Endothelial cell of umbilical vein (primary cell): ENCODE measurements at regions of chr16 and their contacts with region 1.

Region 1: GRCh38 chr16:89330177-89330856 is 112.8 kb downstream of the ZNF778 start:
- DNase-seq: peak; percentile 78
- H3K4me3 ChIP-seq: peak overlapping the region in 1 of 3 experiments; percentile 6
- H3K27ac ChIP-seq: peak overlapping the region; percentile 56
- H3K4me1 ChIP-seq: peaks cover 68% of the 10 kb centered on the region
- H3K27me3 ChIP-seq: no peaks in the 10 kb centered on the region
- CTCF ChIP-seq: no peak
- POLR2A ChIP-seq: peak; percentile 18

Region 2: DNA sequence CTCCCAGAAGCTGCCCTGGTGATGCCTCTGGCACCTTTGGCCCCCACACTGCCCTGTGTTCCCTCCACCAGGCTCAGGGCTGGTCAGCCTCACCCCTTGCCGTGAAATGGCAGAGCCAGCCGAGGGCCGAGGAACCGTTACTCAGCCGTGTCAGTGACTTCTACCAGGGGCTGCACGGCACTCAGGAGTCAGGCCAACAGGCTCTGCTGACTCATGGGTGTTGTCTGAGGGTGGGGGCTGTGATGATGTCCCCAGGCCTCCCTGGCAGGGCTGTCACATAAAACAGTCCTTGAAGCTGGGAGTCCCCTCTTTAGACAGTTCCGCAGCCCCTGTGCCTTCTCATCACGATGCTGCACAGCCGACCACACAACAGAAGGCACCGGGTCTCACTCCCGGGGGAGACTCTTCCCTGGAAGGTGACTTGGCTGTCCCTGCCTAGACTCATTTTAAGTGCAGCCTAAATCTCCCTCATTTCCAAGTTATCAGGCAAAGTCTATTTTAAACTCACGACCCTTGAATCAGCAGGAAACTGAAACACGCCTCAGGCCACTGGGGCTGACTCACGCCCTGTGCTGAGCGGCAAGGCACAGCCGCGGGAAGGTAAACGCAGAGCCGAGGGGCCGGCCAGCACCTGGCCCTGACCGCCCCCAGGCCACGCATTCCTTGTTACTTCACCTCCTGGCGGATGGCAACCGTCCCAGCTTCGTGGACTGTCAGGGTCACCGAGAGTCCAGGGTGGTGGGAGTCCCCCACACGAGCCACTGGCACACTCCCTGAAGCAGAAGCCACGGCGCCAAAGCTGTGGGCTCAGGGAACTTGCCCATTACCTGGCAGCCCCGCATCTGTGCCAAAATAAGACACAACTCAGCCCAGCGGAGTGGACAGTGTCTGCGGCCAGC is 10.2 kb before region 1 on chr16:
- CTCF ChIA-PET with region 1: interaction called, 8 read pairs
- POLR2A ChIA-PET with region 1: no interaction called
- dilution Hi-C with region 1: no loop called
- intact Hi-C with region 1: loop called (anchors 1 kb)
- DNase-seq: peak; percentile 84
- H3K4me3 ChIP-seq: no peak overlapping the region
- H3K27ac ChIP-seq: peak overlapping the region; percentile 77
- H3K4me1 ChIP-seq: peaks cover 85% of the 10 kb centered on the region
- H3K27me3 ChIP-seq: no peaks in the 10 kb centered on the region
- CTCF ChIP-seq: no peak
- POLR2A ChIP-seq: no peak

Region 3: DNA sequence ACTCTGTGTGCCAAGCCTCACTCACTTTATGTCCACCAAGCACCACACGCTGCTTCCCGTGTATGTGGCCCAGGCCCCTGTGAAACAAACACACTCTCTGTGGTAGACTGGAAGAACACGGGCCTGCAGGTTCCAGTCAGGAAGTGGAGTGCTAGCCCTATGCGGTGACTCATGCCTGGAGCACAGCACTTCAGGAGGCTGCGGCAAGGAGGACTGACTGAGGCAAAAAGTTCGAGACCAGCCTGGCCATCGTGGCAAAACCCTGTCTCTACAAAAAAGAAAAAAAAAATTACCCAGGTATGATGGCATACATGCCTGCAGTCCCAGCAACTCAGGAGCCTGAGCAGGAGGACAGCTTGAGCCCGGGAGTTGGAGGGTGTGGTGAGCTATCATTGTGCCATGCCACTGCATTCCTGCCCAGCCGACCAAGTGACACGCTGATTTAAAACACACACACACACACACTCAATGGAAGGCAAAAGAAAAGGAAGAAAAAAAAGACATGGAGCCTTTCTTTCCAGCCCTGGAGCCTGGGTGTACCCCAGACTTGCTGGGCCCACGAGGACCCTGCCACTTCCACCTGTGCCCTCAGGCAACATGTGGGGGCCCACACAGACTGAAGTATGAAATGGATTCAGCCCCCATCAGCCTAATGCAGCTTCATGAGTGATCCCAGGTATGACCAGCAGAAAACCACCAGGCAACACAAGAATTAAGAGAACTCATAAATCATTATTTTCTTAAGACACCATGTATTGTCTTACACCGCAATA is 33.5 kb after region 1 on chr16:
- CTCF ChIA-PET with region 1: interaction called, 6 read pairs
- POLR2A ChIA-PET with region 1: no interaction called
- dilution Hi-C with region 1: no loop called
- intact Hi-C with region 1: loop called (anchors 1 kb)
- DNase-seq: peak; percentile 87
- H3K4me3 ChIP-seq: no peak overlapping the region
- H3K27ac ChIP-seq: peak overlapping the region; percentile 16
- H3K4me1 ChIP-seq: peaks cover 61% of the 10 kb centered on the region
- H3K27me3 ChIP-seq: no peaks in the 10 kb centered on the region
- CTCF ChIP-seq: no peak
- POLR2A ChIP-seq: no peak

Region 4: DNA sequence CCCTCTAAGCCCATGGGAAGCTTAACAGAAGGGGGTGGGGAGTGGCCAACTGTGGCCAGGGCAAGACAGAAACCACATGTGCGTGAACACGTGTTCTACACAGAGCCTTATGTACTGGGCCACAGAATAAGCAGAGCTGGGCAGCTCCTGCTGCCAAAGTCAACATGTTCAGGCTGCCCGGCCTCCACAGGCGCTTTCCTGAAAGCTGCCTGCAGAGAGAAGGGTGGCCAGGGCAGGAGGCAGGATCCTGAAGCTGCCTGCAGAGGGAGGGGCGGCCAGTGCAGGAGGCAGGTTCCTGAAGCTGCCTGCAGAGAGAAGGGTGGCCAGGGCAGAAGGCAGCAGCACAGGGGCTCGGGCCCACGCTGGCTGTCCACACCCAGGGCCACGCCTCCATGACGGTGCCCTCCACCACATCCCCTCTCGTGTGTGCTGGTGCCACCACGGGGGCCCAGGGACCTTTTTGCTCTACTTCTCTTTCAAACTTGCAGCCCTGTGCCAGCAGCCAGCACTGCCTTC is 80.5 kb after region 1 on chr16:
- CTCF ChIA-PET with region 1: interaction called, 3 read pairs
- POLR2A ChIA-PET with region 1: no interaction called
- dilution Hi-C with region 1: no loop called
- intact Hi-C with region 1: loop called (anchors 5 kb)
- DNase-seq: peak; percentile 97
- H3K4me3 ChIP-seq: no peak overlapping the region
- H3K27ac ChIP-seq: peak overlapping the region; percentile 39
- H3K4me1 ChIP-seq: peaks cover 52% of the 10 kb centered on the region
- H3K27me3 ChIP-seq: no peaks in the 10 kb centered on the region
- CTCF ChIP-seq: peak in 1 of 2 donors; percentile 52
- POLR2A ChIP-seq: peak; percentile 22

Region 5: DNA sequence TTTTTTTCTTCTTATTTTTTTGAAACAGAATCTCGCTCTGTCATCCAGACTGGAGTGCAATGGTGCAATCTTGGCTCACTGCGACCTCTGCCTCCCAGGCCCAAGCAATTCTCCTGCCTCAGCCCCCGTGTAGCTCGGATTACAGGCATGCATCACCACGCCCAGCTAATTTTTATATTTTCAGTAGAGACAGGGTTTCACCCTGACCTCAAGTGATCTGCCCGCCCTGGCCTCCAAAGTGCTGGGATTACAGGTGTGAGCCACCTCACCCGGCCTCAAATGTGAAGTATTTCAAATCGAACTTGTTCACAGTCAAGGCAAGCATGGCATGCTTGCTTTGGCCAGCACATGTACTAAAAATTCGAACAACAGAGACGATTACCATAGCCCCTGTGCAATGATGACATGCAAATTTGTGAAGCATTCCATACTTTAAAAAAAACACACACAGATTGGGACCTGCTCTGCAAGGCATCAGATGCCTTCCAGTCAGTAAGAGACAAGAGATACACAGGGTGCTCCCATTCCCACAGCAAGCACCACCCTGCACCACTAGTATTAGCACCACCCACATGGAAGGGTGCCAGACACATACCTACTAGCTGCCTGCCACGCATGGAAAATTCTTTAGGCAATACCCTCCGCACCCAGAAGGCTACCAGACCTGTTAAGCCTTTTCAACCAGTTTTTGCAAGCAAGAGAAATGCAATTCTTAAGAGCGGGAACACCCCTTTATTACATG is 112.8 kb after region 1 on chr16:
- CTCF ChIA-PET with region 1: no interaction called
- POLR2A ChIA-PET with region 1: no interaction called
- dilution Hi-C with region 1: no loop called
- intact Hi-C with region 1: no loop called
- DNase-seq: peak; percentile 20
- H3K4me3 ChIP-seq: no peak overlapping the region
- H3K27ac ChIP-seq: no peak overlapping the region
- H3K4me1 ChIP-seq: peaks cover 17% of the 10 kb centered on the region
- H3K27me3 ChIP-seq: no peaks in the 10 kb centered on the region
- CTCF ChIP-seq: no peak
- POLR2A ChIP-seq: no peak

Region 6: GRCh38 chr16:89490387-89491237 is 160.3 kb after region 1 on chr16 and contains the start of gene ANKRD11:
- CTCF ChIA-PET with region 1: interaction called, 9 read pairs
- POLR2A ChIA-PET with region 1: no interaction called
- dilution Hi-C with region 1: no loop called
- intact Hi-C with region 1: loop called (anchors 2 kb)
- DNase-seq: peak; percentile 100
- H3K4me3 ChIP-seq: peak within 1 kb of the TSS; percentile 73 to 83 (median 76)
- H3K27ac ChIP-seq: peak within 1 kb of the TSS; percentile 55
- H3K4me1 ChIP-seq: peaks cover 23% of the 10 kb centered on the region
- H3K27me3 ChIP-seq: no peaks in the 10 kb centered on the region
- CTCF ChIP-seq: no peak
- POLR2A ChIP-seq: peak; percentile 75
- total RNA-seq, gene ANKRD11: 184 and 191 TPM in 2 replicates

Region 7: DNA sequence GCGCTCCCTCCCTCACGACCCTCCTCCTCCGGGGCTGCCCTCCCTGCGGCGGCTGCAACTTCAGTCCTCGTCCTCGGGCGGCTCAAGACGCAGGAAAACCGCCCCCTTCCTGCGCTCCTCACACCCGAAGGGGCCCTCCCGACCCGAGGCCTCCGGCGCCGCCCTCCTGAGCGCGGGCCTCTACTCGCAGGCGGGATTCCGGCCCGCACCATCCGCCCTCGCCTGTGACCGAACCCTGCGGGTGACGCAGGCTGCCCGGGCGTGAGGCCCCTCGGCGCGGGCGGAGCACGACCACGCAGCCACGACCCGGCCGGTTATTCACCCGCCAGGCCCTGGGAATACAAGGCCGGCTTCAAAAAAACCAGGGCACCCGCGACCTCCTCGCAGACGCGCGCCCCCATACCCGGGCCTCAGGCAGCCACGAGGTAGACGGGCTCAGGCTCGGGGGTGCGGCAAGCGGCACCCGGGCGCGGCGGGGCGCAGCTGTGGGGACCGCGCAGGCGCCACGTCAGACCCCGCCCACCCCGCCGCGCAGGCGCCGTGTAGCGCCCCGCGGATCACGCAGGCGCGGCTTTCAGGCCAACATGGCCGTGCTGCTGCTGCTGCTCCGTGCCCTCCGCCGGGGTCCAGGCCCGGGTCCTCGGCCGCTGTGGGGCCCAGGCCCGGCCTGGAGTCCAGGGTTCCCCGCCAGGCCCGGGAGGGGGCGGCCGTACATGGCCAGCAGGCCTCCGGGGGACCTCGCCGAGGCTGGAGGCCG is 177.7 kb after region 1 on chr16 and contains the start of gene SPG7:
- CTCF ChIA-PET with region 1: interaction called, 11 read pairs
- POLR2A ChIA-PET with region 1: interaction called, 8 read pairs
- dilution Hi-C with region 1: no loop called
- intact Hi-C with region 1: loop called (anchors 1 kb)
- DNase-seq: peak; percentile 91
- H3K4me3 ChIP-seq: peak within 1 kb of the TSS; percentile 15 to 80 (median 65)
- H3K27ac ChIP-seq: peak within 1 kb of the TSS; percentile 89
- H3K4me1 ChIP-seq: peaks cover 28% of the 10 kb centered on the region
- H3K27me3 ChIP-seq: no peaks in the 10 kb centered on the region
- CTCF ChIP-seq: no peak
- POLR2A ChIP-seq: peak; percentile 86
- total RNA-seq, gene SPG7: 139 and 146 TPM in 2 replicates

Region 8: DNA sequence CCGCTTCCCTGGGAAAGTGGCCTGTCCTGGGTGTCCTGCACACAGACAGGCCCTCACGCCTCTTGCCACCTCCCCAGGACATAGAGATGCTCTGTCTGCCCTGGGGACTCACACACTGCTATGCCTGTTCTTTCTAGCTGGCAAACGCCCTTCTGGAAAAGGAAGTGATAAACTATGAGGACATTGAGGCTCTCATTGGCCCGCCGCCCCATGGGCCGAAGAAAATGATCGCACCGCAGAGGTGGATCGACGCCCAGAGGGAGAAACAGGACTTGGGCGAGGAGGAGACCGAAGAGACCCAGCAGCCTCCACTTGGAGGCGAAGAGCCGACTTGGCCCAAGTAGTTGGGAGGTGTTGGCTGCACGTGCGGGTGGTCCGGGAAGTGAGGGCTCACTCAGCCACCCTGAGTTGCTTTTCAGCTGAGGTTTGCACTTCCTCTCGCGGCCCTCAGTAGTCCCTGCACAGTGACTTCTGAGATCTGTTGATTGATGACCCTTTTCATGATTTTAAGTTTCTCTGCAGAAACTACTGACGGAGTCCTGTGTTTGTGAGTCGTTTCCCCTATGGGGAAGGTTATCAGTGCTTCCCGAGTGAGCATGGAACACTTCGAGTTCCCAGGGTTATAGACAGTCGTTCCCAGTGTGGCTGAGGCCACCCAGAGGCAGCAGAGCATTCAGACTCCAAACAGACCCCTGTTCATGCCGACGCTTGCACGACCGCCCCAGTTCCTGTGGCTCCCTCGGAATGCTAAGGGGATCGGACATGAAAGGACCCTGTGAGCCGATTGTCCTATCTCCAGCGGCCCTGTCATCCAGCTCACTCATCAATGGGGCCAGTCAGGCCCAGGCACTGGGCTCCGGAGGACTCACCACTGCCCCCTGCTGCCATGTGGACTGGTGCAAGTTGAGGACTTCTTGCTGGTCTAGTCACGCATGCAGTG is 226.7 kb after region 1 on chr16:
- CTCF ChIA-PET with region 1: interaction called, 23 read pairs
- POLR2A ChIA-PET with region 1: no interaction called
- dilution Hi-C with region 1: no loop called
- intact Hi-C with region 1: loop called (anchors 1 kb)
- DNase-seq: peak; percentile 85
- H3K4me3 ChIP-seq: no peak overlapping the region
- H3K27ac ChIP-seq: no peak overlapping the region
- H3K4me1 ChIP-seq: peaks cover 6% of the 10 kb centered on the region
- H3K27me3 ChIP-seq: no peaks in the 10 kb centered on the region
- CTCF ChIP-seq: peak; percentile 88 to 93
- POLR2A ChIP-seq: no peak

Region 9: DNA sequence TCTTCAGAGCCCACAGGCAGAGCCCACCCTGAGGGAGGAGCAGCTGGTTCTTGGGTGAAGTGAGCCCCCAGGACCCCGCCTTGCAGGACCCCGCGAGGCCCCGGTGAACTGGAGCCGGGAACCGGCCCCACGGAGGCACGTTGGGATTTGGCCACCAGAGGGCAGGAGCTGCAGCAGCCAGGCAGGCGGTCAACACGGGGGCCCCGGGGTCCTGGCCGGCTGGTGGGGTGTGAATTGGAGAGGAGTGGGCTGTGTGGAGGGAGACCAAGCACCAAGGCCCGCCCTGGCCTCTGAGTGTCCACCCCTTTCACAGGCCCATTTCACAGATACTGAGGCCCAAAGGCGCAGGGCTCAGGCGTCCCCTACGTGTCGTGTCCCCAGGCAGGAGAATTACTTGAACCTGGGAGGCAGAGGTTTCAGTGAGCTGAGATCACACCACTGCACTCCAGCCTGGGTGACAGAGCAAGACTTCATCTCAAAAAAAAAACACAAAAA is 285.3 kb after region 1 on chr16:
- CTCF ChIA-PET with region 1: no interaction called
- POLR2A ChIA-PET with region 1: no interaction called
- dilution Hi-C with region 1: no loop called
- intact Hi-C with region 1: no loop called
- DNase-seq: no peak
- H3K4me3 ChIP-seq: no peak overlapping the region
- H3K27ac ChIP-seq: no peak overlapping the region
- H3K4me1 ChIP-seq: peaks cover 2% of the 10 kb centered on the region
- H3K27me3 ChIP-seq: no peaks in the 10 kb centered on the region
- CTCF ChIP-seq: peak; percentile 80 to 85
- POLR2A ChIP-seq: no peak